MCF 10A (cell line): ENCODE measurements at regions of chr14 and their contacts with region 1.

Region 1: DNA sequence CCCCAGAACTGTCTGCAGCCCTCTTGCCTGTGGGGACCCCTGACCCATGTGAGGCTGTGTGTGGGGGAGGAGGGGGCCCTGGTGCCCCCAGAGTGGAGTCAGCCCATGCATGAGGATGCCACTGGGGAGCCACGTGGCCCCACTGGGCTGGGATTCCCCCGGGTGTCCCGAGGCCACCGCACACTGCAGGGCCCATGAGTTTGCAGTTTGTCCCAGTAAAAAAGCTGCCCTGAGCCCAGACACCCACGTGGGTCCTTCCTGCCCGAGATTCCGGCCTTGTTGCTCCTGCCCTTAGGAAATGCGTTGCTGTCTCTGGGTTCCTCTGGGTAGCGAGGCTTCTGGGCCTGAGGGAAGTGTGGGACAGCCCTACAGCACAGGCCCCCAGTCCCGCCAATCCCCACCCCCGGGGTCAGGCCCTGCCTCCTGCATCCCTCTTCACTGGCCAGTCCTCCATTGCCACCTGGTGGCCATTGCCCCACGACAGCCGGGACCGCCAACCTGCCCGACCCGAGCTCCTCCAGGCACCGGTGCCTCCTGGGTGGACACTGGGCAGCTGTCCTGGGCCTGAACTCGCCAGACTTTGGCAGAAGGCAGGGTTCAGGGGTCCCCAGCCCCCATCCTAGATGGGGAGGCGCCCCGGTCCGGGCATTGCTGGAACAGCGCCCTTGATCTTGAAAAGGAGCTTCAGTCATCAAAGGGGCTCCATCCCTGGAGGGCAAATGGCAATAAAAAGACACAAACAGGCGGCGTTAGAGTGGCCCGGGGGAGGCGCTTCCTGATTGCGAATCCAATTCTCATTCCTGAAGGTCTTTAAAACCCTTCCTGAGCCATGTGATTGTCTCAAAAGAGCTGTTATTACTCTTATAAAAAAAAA is 15.6 kb upstream of the C14orf180 start:
- DNase-seq: peak; percentile 59
- H3K4me3 Mint-ChIP-seq: no peak overlapping the region
- H3K27ac Mint-ChIP-seq: no peak overlapping the region
- H3K4me1 Mint-ChIP-seq: peaks cover 6% of the 10 kb centered on the region
- H3K27me3 Mint-ChIP-seq: peaks cover 49% of the 10 kb centered on the region
- CTCF ChIP-seq: peak; percentile 89

Region 2: DNA sequence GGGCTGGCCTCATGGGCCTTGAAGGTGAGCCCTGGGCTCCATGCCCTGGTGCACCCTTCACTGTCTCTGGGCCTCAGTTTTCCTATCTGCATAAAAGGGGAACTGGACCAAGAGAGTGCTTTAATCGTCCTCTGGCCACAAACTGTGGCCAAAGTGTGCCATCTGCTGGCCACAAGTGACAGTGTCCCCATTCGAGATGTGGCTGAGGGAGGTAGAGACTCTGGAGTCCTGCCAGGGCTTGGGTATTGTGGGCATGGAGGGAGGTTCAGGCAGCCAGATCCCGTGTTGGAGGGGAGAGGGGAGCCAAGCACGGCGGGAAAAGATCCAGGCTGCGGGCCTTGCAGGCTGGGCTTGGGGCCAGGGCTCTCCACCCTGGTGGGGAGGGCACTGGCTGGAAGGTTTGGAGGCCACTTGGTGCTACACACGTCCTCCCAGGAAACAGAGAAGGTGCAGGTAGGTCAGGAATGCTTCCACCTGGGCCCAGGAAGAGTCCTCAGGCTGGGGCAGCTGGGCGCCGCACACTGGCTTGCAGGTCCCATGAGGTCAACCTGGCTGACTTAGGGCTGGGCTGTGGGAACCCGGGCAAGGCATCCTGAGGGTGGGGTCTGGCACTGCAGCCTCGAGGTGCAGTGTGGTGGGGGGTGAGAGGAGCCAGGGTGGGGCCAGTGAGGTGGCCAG is 432.9 kb before region 1 on chr14:
- CTCF ChIA-PET with region 1: interaction called, 16 read pairs
- POLR2A ChIA-PET with region 1: no interaction called
- intact Hi-C with region 1: no loop called
- DNase-seq: peak; percentile 61
- H3K4me3 Mint-ChIP-seq: no peak overlapping the region
- H3K27ac Mint-ChIP-seq: no peak overlapping the region
- H3K4me1 Mint-ChIP-seq: no peaks in the 10 kb centered on the region
- H3K27me3 Mint-ChIP-seq: peaks cover 55% of the 10 kb centered on the region
- CTCF ChIP-seq: peak; percentile 80

Region 3: GRCh38 chr14:104137297-104138097 is 426.5 kb before region 1 on chr14:
- CTCF ChIA-PET with region 1: interaction called, 39 read pairs
- POLR2A ChIA-PET with region 1: interaction called, 6 read pairs
- intact Hi-C with region 1: loop called (anchors 1 kb)
- DNase-seq: peak; percentile 51
- H3K4me3 Mint-ChIP-seq: peak overlapping the region; percentile 43
- H3K27ac Mint-ChIP-seq: no peak overlapping the region
- H3K4me1 Mint-ChIP-seq: no peaks in the 10 kb centered on the region
- H3K27me3 Mint-ChIP-seq: peaks cover 46% of the 10 kb centered on the region
- CTCF ChIP-seq: peak; percentile 95

Region 4: GRCh38 chr14:104143521-104144452 is 420.2 kb before region 1 on chr14:
- CTCF ChIA-PET with region 1: interaction called, 24 read pairs
- POLR2A ChIA-PET with region 1: no interaction called
- intact Hi-C with region 1: no loop called
- DNase-seq: no peak
- H3K4me3 Mint-ChIP-seq: no peak overlapping the region
- H3K27ac Mint-ChIP-seq: no peak overlapping the region
- H3K4me1 Mint-ChIP-seq: no peaks in the 10 kb centered on the region
- H3K27me3 Mint-ChIP-seq: peaks cover 42% of the 10 kb centered on the region
- CTCF ChIP-seq: no peak

Region 5: DNA sequence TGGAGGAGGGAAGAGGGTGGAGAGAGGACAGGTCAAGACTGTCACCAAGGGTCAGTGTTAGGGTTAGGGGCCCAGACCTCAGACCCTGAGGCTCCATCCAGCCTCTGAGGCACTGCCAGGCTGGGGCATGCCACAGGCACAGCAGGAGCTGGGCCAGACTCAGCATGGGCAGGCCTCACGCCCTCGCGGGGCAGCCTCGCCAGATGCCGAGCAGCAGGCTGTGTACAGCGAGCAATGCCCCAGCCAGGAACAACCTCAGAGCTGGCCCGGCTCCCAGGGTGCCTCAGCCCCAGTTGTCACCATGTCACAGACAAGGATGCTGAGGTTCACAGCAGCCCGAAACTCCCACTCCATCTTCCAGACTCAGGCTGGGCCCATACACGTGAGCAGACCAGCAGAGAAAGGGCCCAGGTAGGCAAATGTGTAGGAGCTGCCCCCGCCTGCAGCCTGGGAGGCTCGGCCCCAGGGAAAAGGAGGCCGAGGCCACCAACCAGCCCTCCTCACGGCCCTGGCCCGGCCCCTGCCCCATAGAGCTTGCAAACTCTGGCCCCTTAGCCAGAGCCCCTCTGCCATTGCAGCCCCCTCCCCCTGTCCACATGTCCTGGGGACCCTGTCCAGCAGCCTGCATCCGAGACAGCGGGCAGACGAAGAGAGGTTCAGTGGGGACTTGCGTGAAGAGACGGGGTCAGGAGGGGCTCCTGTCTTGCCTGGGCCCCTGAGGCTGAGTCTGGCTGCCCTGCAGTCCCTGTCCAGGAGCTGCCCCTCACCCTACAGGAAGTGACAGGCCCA is 23.0 kb after region 1 on chr14:
- CTCF ChIA-PET with region 1: interaction called, 14 read pairs
- POLR2A ChIA-PET with region 1: no interaction called
- intact Hi-C with region 1: no loop called
- DNase-seq: no peak
- H3K4me3 Mint-ChIP-seq: no peak overlapping the region
- H3K27ac Mint-ChIP-seq: no peak overlapping the region
- H3K4me1 Mint-ChIP-seq: peaks cover 5% of the 10 kb centered on the region
- H3K27me3 Mint-ChIP-seq: peaks cover 38% of the 10 kb centered on the region
- CTCF ChIP-seq: no peak

Region 6: DNA sequence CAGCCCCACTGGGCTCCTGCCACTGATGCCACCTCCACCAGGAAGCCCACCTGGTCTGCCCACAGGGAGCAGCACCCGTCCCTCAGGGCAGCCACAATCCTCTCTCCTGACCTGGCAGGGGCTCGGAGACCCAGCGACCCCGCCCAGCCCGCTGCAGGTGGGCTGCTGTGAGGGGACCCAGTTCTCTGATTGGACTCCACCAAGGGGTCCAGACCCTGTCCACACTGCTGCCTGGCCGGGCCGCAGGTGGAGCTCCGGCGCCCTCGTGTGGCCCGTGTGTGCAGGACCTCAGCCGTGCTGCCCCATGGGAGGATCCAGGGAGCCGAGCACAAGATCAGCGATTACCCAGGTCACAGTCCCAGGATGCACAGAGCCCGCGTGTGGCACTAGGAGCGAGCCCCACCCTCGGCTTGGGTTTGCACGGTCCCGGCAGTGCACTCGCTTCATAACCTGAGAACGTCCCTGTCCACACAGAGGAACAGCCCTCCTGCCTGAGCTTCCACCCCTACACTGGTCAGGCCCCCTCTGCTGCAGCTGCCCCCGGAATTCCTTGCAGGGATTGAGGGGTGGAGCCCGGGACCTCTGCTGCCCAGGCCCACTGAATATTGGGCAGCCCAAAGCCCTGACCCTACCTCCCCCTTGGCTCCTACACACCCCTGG is 76.0 kb after region 1 on chr14:
- CTCF ChIA-PET with region 1: interaction called, 7 read pairs
- POLR2A ChIA-PET with region 1: no interaction called
- intact Hi-C with region 1: loop called (anchors 1 kb)
- DNase-seq: peak; percentile 60
- H3K4me3 Mint-ChIP-seq: no peak overlapping the region
- H3K27ac Mint-ChIP-seq: no peak overlapping the region
- H3K4me1 Mint-ChIP-seq: no peaks in the 10 kb centered on the region
- H3K27me3 Mint-ChIP-seq: peaks cover 32% of the 10 kb centered on the region
- CTCF ChIP-seq: peak; percentile 99

Region 7: GRCh38 chr14:105197271-105197670 is 633.3 kb after region 1 on chr14:
- CTCF ChIA-PET with region 1: no interaction called
- POLR2A ChIA-PET with region 1: no interaction called
- intact Hi-C with region 1: no loop called
- DNase-seq: peak; percentile 83
- H3K4me3 Mint-ChIP-seq: no peak overlapping the region
- H3K27ac Mint-ChIP-seq: no peak overlapping the region
- H3K4me1 Mint-ChIP-seq: peaks cover 21% of the 10 kb centered on the region
- H3K27me3 Mint-ChIP-seq: peaks cover 58% of the 10 kb centered on the region
- CTCF ChIP-seq: no peak